Activated CD4-positive, alpha-beta T cell treated with anti-CD3 and anti-CD28 coated beads, Interleukin-2, amount 10 ng/mL, durations not matched to agents 24 days and 14 days (primary cell): ENCODE measurements at regions of chr2 and their contacts with region 1.

Region 1: DNA sequence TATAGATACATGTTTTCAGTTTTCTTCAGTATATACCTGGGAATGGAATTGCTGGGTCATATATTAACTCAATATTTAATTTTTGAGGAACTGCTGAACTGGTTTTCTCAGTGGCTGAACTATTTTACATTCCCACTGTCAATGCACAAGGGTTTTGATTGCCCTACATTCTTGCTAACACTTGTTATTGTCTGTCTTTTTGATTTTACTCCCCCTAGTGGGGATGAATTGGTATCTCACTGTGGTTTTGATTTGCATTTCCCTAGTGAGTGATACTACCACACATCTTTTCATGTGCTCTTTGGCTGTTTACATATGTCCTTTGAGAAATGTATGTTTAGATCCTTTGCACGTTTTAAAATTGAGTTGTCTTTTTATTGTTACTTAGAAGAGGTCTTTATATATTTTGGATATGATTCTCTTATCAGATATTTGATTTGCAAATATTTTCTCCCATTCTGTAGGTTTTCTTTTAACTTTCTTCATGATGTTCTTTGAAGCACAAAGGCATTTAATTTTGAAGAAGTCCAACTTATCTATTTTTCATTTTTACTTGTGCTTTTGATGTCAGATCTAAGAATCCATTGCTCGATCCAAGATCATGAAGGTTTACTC is 36.2 kb downstream of the ASB1 start:
- DNase-seq: peak; percentile 77
- H3K4me3 Mint-ChIP-seq: no peak overlapping the region
- H3K27ac Mint-ChIP-seq: no peak overlapping the region
- H3K4me1 Mint-ChIP-seq: no peaks in the 10 kb centered on the region
- H3K27me3 Mint-ChIP-seq: no peaks in the 10 kb centered on the region

Region 2: DNA sequence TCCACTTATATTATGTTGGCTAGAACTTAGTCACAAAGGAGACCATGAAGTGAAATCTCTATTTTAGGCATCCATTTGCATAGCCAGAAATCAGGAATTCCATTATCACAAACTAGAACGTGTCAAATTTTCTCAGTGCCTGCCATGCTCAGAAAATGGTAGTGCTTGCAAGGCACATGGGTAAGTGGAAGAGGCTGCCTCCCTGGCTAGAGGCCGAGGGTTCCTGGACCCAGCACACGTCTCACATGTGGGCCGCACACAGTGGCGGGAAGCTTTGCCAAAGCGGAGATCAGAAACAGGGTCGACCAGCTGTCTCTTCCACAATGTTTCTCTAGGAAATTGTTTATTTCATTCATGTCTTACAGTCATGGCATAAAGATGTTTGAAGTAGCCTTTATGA is 100.3 kb before region 1 on chr2:
- intact Hi-C with region 1: loop called (anchors 1 kb)
- DNase-seq: no peak
- H3K4me3 Mint-ChIP-seq: no peak overlapping the region
- H3K27ac Mint-ChIP-seq: no peak overlapping the region
- H3K4me1 Mint-ChIP-seq: peaks cover 17% of the 10 kb centered on the region
- H3K27me3 Mint-ChIP-seq: no peaks in the 10 kb centered on the region

Region 3: DNA sequence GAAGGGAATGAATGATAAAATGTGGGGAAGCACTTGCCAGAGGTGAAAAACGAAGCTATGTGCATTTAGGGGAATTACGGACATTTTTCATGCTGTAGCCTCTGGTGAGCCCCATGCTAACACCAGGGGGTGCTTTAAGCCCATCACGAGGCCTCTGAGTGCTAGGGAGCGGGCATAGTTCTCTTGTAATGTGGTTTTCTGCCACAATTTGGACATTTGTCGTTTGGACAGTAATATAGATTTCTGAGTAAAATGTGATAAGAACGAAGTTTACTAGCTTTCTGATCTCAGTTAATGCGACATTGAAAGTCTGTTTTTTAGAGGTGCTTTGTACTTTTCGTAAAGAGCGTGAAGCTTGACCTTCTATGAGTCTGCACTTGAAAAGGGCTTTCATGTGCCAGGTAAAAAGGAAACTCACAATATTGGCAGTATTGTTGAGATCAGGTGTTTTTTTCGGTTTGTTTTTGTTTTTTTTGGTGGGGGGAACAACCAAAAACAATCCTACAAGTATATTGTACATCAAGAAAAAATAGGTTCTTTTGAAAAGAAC is 92.0 kb before region 1 on chr2:
- intact Hi-C with region 1: loop called (anchors 1 kb)
- DNase-seq: peak; percentile 84
- H3K4me3 Mint-ChIP-seq: no peak overlapping the region
- H3K27ac Mint-ChIP-seq: no peak overlapping the region
- H3K4me1 Mint-ChIP-seq: peaks cover 6% of the 10 kb centered on the region
- H3K27me3 Mint-ChIP-seq: peaks cover 12% of the 10 kb centered on the region

Region 4: GRCh38 chr2:238449909-238450417 is 12.9 kb before region 1 on chr2:
- intact Hi-C with region 1: no loop called
- DNase-seq: no peak
- H3K4me3 Mint-ChIP-seq: no peak overlapping the region
- H3K27ac Mint-ChIP-seq: no peak overlapping the region
- H3K4me1 Mint-ChIP-seq: no peaks in the 10 kb centered on the region
- H3K27me3 Mint-ChIP-seq: no peaks in the 10 kb centered on the region